Naive thymus-derived CD4-positive, alpha-beta T cell (primary cell): ENCODE measurements at regions of chr2 and their contacts with region 1.

Region 1: GRCh38 chr2:170715062-170715931 is at the start of gene SP5:
- DNase-seq: peak; percentile 25 to 63 (median 52)
- ATAC-seq: peak; percentile 44
- H3K4me3 ChIP-seq: peak within 1 kb of the TSS; percentile 64
- H3K4me3 Mint-ChIP-seq: peak within 1 kb of the TSS; percentile 81 to 99 (median 93)
- H3K27ac ChIP-seq: no peak within 1 kb of the TSS
- H3K27ac Mint-ChIP-seq: peak within 1 kb of the TSS in 5 of 9 donors; percentile 47 to 76 (median 52)
- H3K4me1 ChIP-seq: peaks cover 0 to 39% of the 10 kb centered on the region in 2 donors
- H3K4me1 Mint-ChIP-seq: peaks cover 18 to 50% (median 34%) of the 10 kb centered on the region in 7 donors
- H3K27me3 ChIP-seq: peaks cover 11 to 41% of the 10 kb centered on the region in 2 donors
- H3K27me3 Mint-ChIP-seq: peaks cover 67 to 74% (median 69%) of the 10 kb centered on the region in 5 donors
- total RNA-seq, gene SP5: not detected

Region 2: DNA sequence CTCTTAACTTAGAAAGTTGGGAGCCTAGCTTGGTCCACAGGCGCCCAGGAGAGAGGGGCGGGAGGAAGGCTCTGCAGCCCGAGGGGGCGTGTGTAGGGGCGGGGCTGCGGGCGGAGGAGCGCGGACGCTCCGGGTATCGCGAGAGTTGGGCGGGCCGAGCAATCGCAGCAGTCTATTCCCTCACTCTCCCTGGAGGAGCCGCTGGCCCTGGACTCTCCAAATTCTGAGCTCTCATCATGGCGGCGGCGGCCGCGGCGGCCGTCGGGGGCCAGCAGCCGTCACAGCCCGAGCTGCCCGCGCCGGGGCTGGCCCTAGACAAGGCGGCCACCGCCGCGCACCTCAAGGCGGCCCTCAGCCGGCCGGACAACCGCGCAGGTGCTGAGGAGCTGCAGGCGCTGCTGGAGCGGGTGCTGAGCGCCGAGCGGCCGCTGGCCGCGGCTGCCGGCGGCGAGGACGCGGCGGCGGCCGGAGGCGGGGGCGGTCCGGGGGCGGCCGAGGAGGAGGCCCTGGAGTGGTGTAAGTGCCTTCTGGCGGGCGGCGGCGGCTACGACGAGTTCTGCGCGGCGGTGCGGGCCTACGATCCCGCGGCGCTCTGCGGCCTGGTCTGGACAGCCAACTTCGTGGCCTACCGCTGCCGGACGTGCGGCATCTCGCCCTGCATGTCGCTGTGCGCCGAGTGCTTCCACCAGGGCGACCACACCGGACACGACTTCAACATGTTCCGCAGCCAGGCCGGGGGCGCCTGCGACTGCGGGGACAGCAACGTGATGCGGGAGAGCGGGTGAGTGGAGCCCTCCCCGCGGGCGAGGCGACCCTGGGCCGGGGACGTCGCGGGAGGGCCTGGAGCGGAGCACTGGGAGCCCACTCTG is 887.8 kb before region 1 on chr2 and contains the start of gene UBR3:
- CTCF ChIA-PET with region 1: no interaction called
- POLR2A ChIA-PET with region 1: no interaction called
- intact Hi-C with region 1: no loop called
- DNase-seq: peak; percentile 80 to 95 (median 87)
- ATAC-seq: peak; percentile 88
- H3K4me3 ChIP-seq: peak within 1 kb of the TSS; percentile 77
- H3K4me3 Mint-ChIP-seq: peak within 1 kb of the TSS; percentile 89 to 99 (median 98)
- H3K27ac ChIP-seq: peak within 1 kb of the TSS; percentile 80
- H3K27ac Mint-ChIP-seq: peak within 1 kb of the TSS; percentile 55 to 97 (median 91)
- H3K4me1 ChIP-seq: peaks cover 24 to 37% of the 10 kb centered on the region in 2 donors
- H3K4me1 Mint-ChIP-seq: peaks cover 38 to 77% (median 64%) of the 10 kb centered on the region in 7 donors
- H3K27me3 ChIP-seq: no peaks in the 10 kb centered on the region
- H3K27me3 Mint-ChIP-seq: no peaks in the 10 kb centered on the region
- total RNA-seq, gene UBR3: 28.4 to 48.2 (median 44.6) TPM

Region 3: GRCh38 chr2:170409164-170409535 is 306.1 kb before region 1 on chr2:
- CTCF ChIA-PET with region 1: no interaction called
- POLR2A ChIA-PET with region 1: no interaction called
- intact Hi-C with region 1: loop called (anchors 2 to 5 kb)
- DNase-seq: peak; percentile 46 to 80 (median 69)
- ATAC-seq: peak; percentile 86
- H3K4me3 ChIP-seq: no peak overlapping the region
- H3K4me3 Mint-ChIP-seq: peak overlapping the region in 8 of 10 donors; percentile 61 to 80 (median 64)
- H3K27ac ChIP-seq: no peak overlapping the region
- H3K27ac Mint-ChIP-seq: peak overlapping the region in 2 of 9 donors; percentile 43 to 44
- H3K4me1 ChIP-seq: peaks cover 0 to 6% of the 10 kb centered on the region in 2 donors
- H3K4me1 Mint-ChIP-seq: peaks cover 5 to 15% (median 11%) of the 10 kb centered on the region in 7 donors
- H3K27me3 ChIP-seq: no peaks in the 10 kb centered on the region
- H3K27me3 Mint-ChIP-seq: peaks cover 24 to 32% (median 32%) of the 10 kb centered on the region in 5 donors

Region 4: GRCh38 chr2:170505631-170506275 is 209.5 kb before region 1 on chr2:
- CTCF ChIA-PET with region 1: interaction called, 3 read pairs
- POLR2A ChIA-PET with region 1: no interaction called
- intact Hi-C with region 1: loop called in 1 of 2 experiments (anchors 5 kb)
- DNase-seq: peak in 1 of 9 donors; percentile 10
- ATAC-seq: no peak
- H3K4me3 ChIP-seq: no peak overlapping the region
- H3K4me3 Mint-ChIP-seq: peak overlapping the region in 3 of 10 donors; percentile 14 to 56 (median 52)
- H3K27ac ChIP-seq: no peak overlapping the region
- H3K27ac Mint-ChIP-seq: peak overlapping the region in 1 of 9 donors; percentile 41
- H3K4me1 ChIP-seq: peaks cover 7 to 25% of the 10 kb centered on the region in 2 donors
- H3K4me1 Mint-ChIP-seq: peaks cover 11 to 43% (median 34%) of the 10 kb centered on the region in 7 donors
- H3K27me3 ChIP-seq: no peaks in the 10 kb centered on the region
- H3K27me3 Mint-ChIP-seq: peaks cover 12 to 54% (median 25%) of the 10 kb centered on the region in 5 donors

Region 5: GRCh38 chr2:170651624-170652325 is 63.5 kb before region 1 on chr2:
- CTCF ChIA-PET with region 1: no interaction called
- POLR2A ChIA-PET with region 1: no interaction called
- intact Hi-C with region 1: loop called in 1 of 2 experiments (anchors 1 kb)
- DNase-seq: peak in 7 of 9 donors; percentile 74 to 89 (median 84)
- ATAC-seq: peak; percentile 99
- H3K4me3 ChIP-seq: no peak overlapping the region
- H3K4me3 Mint-ChIP-seq: peak overlapping the region; percentile 44 to 80 (median 64)
- H3K27ac ChIP-seq: no peak overlapping the region
- H3K27ac Mint-ChIP-seq: peak overlapping the region in 7 of 9 donors; percentile 12 to 87 (median 25)
- H3K4me1 ChIP-seq: peaks cover 11 to 23% of the 10 kb centered on the region in 2 donors
- H3K4me1 Mint-ChIP-seq: peaks cover 17 to 35% (median 32%) of the 10 kb centered on the region in 7 donors
- H3K27me3 ChIP-seq: no peaks in the 10 kb centered on the region
- H3K27me3 Mint-ChIP-seq: peaks cover 0 to 20% (median 9%) of the 10 kb centered on the region in 5 donors

Region 6: GRCh38 chr2:172084734-172085459 is 1369.6 kb after region 1 on chr2:
- CTCF ChIA-PET with region 1: no interaction called
- POLR2A ChIA-PET with region 1: no interaction called
- intact Hi-C with region 1: loop called in 1 of 2 experiments (anchors 10 kb)
- DNase-seq: peak in 5 of 9 donors; percentile 37 to 57 (median 52)
- ATAC-seq: peak; percentile 81
- H3K4me3 ChIP-seq: peak overlapping the region; percentile 15
- H3K4me3 Mint-ChIP-seq: peak overlapping the region; percentile 70 to 85 (median 78)
- H3K27ac ChIP-seq: no peak overlapping the region
- H3K27ac Mint-ChIP-seq: peak overlapping the region in 8 of 9 donors; percentile 14 to 91 (median 84)
- H3K4me1 ChIP-seq: peaks cover 50 to 51% of the 10 kb centered on the region in 2 donors
- H3K4me1 Mint-ChIP-seq: peaks cover 36 to 74% (median 58%) of the 10 kb centered on the region in 7 donors
- H3K27me3 ChIP-seq: peaks cover 81 to 96% of the 10 kb centered on the region in 2 donors
- H3K27me3 Mint-ChIP-seq: peaks cover 80 to 98% (median 88%) of the 10 kb centered on the region in 5 donors